ENCODE measurements at regions of chr5 and their contacts with region 1.

Region 1: GRCh38 chr5:43120720-43121564 is at the start of gene ZNF131:
- DNase-seq: peak; percentile 93

Region 2: GRCh38 chr5:43040287-43041098 is 80.4 kb before region 1 on chr5 and contains the start of gene ANXA2R:
- CTCF ChIA-PET with region 1: interaction called, 3 read pairs
- POLR2A ChIA-PET with region 1: interaction called, 13 read pairs
- DNase-seq: peak; percentile 45

Region 3: DNA sequence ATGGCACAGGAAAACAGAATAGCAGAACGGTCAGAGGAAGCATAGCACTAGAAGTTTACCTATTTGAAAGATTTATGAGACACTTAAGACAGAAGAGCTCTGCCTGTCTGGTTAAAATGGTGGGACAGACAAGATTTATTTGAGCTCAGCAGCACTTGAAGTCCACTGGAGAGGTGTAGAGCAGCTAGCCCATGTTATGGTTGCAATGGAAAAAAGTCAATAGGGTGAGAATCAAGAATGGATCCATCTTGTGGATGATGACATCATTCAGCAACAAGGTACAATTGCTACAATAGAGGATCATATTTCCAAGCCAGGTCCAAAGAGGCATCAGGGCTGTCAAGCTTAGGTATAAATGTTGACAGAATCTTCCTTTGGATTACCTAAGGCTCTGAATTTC is 21.3 kb before region 1 on chr5:
- CTCF ChIA-PET with region 1: interaction called, 6 read pairs
- POLR2A ChIA-PET with region 1: interaction called, 12 read pairs
- DNase-seq: no peak

Region 4: GRCh38 chr5:43140286-43140685 is 19.3 kb after region 1 on chr5:
- CTCF ChIA-PET with region 1: no interaction called
- POLR2A ChIA-PET with region 1: interaction called, 11 read pairs
- DNase-seq: no peak

Region 5: DNA sequence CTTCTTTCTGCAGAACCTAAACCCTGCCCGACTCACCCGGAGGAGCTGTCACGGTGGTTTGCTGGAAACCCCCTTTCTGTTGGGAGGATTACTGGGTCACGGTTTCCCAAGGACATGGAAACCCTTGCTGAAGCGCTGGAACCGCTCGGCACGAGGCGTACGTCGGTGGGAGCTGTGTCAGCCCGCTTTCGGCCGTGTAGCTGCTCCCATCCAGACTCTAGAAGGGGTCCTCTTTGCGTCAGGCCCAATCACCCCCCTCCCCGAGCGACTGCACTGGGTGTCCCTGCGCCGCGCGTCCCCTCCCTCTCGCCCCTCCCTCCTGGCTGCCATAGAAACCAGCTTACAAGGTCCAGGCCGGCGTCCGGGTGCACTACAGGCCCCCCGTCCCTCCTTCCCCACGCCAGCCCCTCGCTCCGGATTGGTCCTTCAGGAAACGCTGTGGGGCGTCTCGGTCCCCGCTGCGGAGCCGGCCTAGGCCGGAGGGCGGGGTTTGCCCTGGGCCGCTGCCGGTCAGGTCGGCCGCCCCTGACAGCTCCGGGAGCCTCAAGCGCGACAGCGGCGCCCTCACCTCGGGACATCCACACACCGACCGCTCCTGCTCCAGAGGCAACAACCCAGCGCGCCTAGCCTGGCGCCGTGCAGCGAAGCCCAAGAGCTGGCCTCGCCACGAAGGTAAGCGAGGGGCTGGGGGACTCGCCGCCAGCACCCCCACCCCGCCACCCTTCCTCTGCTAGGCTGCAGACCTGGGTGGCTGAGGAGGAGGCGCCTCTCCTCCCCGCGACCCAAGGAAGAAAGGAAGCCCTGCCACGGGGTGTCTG is 71.0 kb after region 1 on chr5 and contains the start of gene NIM1K:
- CTCF ChIA-PET with region 1: no interaction called
- POLR2A ChIA-PET with region 1: interaction called, 13 read pairs
- DNase-seq: peak; percentile 65